GM10248 (cell line): ENCODE measurements at regions of chr5 and their contacts with region 1.

Region 1: DNA sequence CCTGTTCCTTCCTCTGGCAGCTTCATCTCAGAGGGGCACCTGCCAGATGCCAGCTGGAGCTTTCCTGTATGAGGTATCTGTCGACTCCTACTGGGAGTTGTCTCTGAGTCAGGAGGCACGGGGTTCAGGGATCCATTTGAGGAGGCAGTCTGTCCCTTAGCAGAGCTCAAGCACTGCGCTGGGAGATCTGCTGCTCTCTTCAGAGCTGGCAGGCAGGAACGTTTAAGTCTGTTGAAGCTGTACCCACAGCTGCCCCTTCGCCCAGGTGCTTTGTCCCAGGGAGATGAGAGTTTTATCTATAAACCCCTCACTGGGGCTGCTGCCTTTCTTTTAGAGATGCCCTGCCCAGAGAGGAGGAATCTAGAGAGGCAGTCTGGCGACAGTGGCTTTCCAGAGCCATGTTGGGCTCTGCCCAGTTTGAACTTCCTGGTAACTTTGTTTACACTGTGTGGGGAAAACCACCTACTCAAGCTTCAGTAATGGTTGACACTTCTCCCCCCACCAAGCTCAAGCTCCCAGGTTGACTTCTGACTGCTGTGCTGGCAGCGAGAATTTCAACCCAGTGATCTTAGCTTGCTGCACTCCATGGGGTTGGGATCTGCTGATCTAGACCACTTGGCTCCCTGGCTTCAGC is 11.8 kb upstream of the ITGA2 start:
- DNase-seq: no peak
- CTCF ChIP-seq: no peak

Region 2: GRCh38 chr5:53114988-53115387 is 137.6 kb after region 1 on chr5:
- CTCF ChIA-PET with region 1: interaction called, 3 read pairs
- POLR2A ChIA-PET with region 1: interaction called, 10 read pairs
- DNase-seq: no peak
- CTCF ChIP-seq: no peak